Esophagus muscularis mucosa (tissue), 4 donors: ENCODE measurements at regions of chr10 and their contacts with region 1.

Region 1: GRCh38 chr10:93541402-93542357 is 24.8 kb upstream of the FFAR4 start:
- DNase-seq: no peak
- H3K4me3 ChIP-seq: peak overlapping the region; percentile 13 to 32 (median 30)
- H3K27ac ChIP-seq: no peak overlapping the region
- H3K4me1 ChIP-seq: peaks cover 3 to 13% (median 7%) of the 10 kb centered on the region in 4 donors
- H3K27me3 ChIP-seq: no peaks in the 10 kb centered on the region
- CTCF ChIP-seq: peak; percentile 66 to 87 (median 75)
- EP300 ChIP-seq: no peak
- POLR2A ChIP-seq: no peak

Region 2: DNA sequence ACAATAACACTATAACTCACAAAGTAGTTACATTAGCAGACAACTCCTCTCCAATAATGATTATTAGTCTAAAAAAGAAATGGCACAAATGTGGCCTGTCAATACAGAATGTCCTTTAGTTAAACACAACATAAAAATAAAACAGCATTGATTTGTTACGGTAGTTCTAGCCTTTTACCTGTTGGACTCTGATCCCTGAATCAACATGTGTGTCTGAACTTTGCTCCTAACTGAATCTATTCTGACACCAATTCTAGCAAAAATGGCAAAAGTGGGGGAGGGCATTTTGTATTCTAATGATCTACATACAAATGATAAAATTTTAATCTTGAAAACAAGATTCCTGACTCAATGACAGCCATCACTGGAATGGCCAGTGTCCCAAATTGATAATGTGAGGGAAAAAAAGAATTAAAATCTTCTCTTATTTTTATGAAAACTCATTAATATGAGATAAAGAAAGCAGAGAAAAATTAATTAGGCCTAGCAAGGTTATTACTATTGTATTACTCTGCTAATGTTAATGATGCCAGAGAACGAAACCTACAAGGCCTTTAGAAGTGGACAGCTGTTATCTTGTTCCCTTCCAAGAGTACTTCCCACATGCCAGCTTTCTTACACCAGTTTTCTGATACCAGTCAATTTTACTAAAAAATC is 130.5 kb after region 1 on chr10:
- intact Hi-C with region 1: loop called (anchors 10 kb)
- DNase-seq: no peak
- H3K4me3 ChIP-seq: no peak overlapping the region
- H3K27ac ChIP-seq: no peak overlapping the region
- H3K4me1 ChIP-seq: no peaks in the 10 kb centered on the region
- H3K27me3 ChIP-seq: no peaks in the 10 kb centered on the region
- CTCF ChIP-seq: no peak
- EP300 ChIP-seq: no peak
- POLR2A ChIP-seq: no peak

Region 3: DNA sequence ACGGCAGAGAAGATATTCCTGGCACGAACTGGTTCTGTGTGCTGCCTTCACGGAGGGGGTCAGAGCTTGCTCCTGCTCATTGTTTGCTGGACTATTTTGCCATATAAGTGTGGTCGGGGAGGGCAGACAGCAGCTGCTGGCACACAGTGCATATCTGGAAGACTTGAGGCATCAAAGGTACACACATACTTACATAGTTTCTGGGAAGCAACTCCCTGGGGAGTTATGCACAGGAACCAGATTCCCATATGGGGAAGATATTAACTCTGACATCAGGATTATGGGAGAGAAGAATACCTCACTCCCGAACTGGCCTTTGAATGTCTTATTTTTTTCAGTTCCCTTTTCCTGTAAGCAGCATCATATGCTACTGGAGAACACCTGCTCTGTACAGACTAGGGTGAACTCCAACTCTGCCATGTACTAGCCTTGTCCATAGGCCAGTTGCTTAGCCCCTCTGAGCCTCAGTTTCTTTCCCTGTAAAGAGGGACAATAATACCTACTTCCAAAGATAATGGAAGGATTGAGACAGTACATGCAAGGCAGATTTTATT is 257.6 kb after region 1 on chr10:
- intact Hi-C with region 1: no loop called
- DNase-seq: no peak
- H3K4me3 ChIP-seq: no peak overlapping the region
- H3K27ac ChIP-seq: no peak overlapping the region
- H3K4me1 ChIP-seq: no peaks in the 10 kb centered on the region
- H3K27me3 ChIP-seq: peaks cover 0 to 17% (median 0%) of the 10 kb centered on the region in 4 donors
- CTCF ChIP-seq: no peak
- EP300 ChIP-seq: no peak
- POLR2A ChIP-seq: no peak